Posterior cingulate gyrus (tissue), 11 donors: ENCODE measurements at regions of chr5 and their contacts with region 1.

Region 1: GRCh38 chr5:157148734-157149615 is 6.3 kb upstream of the MED7 start:
- DNase-seq: peak in 6 of 10 donors; percentile 36 to 87 (median 66)

Region 2: DNA sequence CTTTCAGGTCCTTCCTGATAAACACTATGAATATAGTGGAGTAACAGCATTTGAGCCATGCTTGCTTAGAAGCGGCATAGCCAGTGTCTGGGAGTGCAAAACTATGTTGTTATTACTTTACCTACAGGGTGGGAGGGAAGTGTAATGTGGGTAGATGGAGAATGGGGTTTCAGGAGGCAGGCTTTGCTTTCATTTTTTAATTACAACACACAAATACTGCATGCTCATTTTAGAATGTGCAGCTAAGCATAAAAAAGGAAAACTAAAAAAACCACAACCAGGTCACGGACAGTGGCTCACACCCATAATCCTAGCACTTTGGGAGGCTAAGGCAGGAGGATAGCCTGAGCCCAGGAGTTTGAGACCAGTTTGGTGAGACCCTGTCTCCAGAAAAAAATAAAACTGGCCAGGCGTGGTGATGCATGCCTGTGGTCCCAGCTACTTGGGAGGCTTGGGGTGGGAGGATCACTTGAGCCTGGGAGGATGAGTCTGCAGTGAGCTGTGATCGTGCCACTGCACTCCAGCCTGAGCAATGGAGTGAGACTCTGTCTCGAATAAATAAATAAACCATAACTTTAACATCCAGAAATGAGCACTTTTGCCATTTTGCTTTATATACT is 110.3 kb before region 1 on chr5:
- intact Hi-C with region 1: no loop called
- DNase-seq: no peak

Region 3: GRCh38 chr5:157108976-157109375 is 40.0 kb before region 1 on chr5 and contains the start of gene HAVCR2:
- intact Hi-C with region 1: no loop called
- DNase-seq: peak in 6 of 10 donors; percentile 22 to 87 (median 35)

Region 4: DNA sequence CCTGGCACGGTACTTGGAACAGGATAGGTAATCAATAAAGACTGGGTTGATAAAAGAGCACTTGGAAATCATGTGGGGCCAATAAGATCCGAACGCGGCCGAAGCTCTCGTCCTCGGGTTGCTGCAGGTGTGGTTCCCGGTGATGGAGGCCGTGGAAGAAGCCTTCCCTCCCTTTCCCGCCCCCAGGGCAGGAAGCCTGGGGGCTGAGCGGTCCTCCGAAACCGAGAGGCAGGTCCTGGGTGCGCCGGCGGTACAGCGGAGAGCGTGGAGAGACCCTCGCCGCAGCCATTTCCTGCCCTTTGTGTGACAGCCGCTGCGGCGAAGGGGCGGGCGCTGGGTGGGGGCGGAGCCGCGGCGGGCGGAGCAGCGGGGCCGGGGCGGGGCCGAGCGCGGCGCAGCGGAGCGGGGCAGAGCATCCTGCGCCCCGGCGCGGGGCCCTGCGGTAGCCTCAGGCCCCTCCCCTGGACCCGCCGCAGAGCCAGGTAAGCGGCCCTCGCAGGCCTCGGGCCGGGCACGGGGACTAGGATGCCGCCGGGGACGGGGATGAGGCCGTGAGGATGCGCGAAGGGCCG is 116.8 kb after region 1 on chr5 and contains the start of gene CYFIP2:
- intact Hi-C with region 1: loop called (anchors 5 kb)
- DNase-seq: peak; percentile 50 to 94 (median 70)